T-cell (primary cell): ENCODE measurements at regions of chr15 and their contacts with region 1.

Region 1: GRCh38 chr15:92881802-92882696 is 18.1 kb upstream of the CHD2 start:
- DNase-seq: peak in 33 of 35 experiments; percentile 95 to 100 (median 98)
- ATAC-seq: peak; percentile 89 to 91 (median 90)
- H3K4me3 ChIP-seq: peak overlapping the region; percentile 20 to 42
- H3K4me3 Mint-ChIP-seq: peak overlapping the region; percentile 85 to 93 (median 86)
- H3K27ac ChIP-seq: peak overlapping the region; percentile 85
- H3K27ac Mint-ChIP-seq: peak overlapping the region; percentile 99
- H3K4me1 ChIP-seq: peaks cover 36 to 52% of the 10 kb centered on the region in 2 experiments
- H3K4me1 Mint-ChIP-seq: peaks cover 62 to 76% (median 63%) of the 10 kb centered on the region in 3 donors
- H3K27me3 ChIP-seq: no peaks in the 10 kb centered on the region
- H3K27me3 Mint-ChIP-seq: no peaks in the 10 kb centered on the region

Region 2: GRCh38 chr15:92751524-92751923 is 130.5 kb before region 1 on chr15:
- CTCF ChIA-PET with region 1: no interaction called
- POLR2A ChIA-PET with region 1: no interaction called
- DNase-seq: no peak
- ATAC-seq: no peak
- H3K4me3 ChIP-seq: no peak overlapping the region
- H3K4me3 Mint-ChIP-seq: no peak overlapping the region
- H3K27ac ChIP-seq: no peak overlapping the region
- H3K27ac Mint-ChIP-seq: no peak overlapping the region
- H3K4me1 ChIP-seq: no peaks in the 10 kb centered on the region
- H3K4me1 Mint-ChIP-seq: no peaks in the 10 kb centered on the region
- H3K27me3 ChIP-seq: peaks cover 0 to 6% of the 10 kb centered on the region in 2 experiments
- H3K27me3 Mint-ChIP-seq: peaks cover 0 to 5% of the 10 kb centered on the region in 2 donors

Region 3: GRCh38 chr15:92808978-92809879 is 72.8 kb before region 1 on chr15:
- CTCF ChIA-PET with region 1: interaction called, 7 to 43 read pairs
- POLR2A ChIA-PET with region 1: interaction called, 18 to 132 read pairs
- DNase-seq: peak; percentile 96 to 99 (median 98)
- ATAC-seq: peak; percentile 83 to 91 (median 84)
- H3K4me3 ChIP-seq: peak overlapping the region; percentile 62 to 94
- H3K4me3 Mint-ChIP-seq: peak overlapping the region; percentile 85 to 91 (median 91)
- H3K27ac ChIP-seq: peak overlapping the region; percentile 100
- H3K27ac Mint-ChIP-seq: peak overlapping the region; percentile 98 to 99
- H3K4me1 ChIP-seq: peaks cover 32 to 56% of the 10 kb centered on the region in 2 experiments
- H3K4me1 Mint-ChIP-seq: peaks cover 44 to 53% (median 51%) of the 10 kb centered on the region in 3 donors
- H3K27me3 ChIP-seq: no peaks in the 10 kb centered on the region
- H3K27me3 Mint-ChIP-seq: no peaks in the 10 kb centered on the region

Region 4: GRCh38 chr15:92831655-92832328 is 50.3 kb before region 1 on chr15:
- CTCF ChIA-PET with region 1: interaction called in 1 of 2 experiments, 22 read pairs
- POLR2A ChIA-PET with region 1: interaction called, 27 to 35 read pairs
- DNase-seq: peak; percentile 67 to 90 (median 78)
- ATAC-seq: peak; percentile 92 to 95 (median 94)
- H3K4me3 ChIP-seq: peak overlapping the region; percentile 29 to 47
- H3K4me3 Mint-ChIP-seq: peak overlapping the region; percentile 57 to 77 (median 71)
- H3K27ac ChIP-seq: peak overlapping the region; percentile 92
- H3K27ac Mint-ChIP-seq: peak overlapping the region; percentile 97 to 99
- H3K4me1 ChIP-seq: peaks cover 33 to 35% of the 10 kb centered on the region in 2 experiments
- H3K4me1 Mint-ChIP-seq: peaks cover 44 to 51% (median 48%) of the 10 kb centered on the region in 3 donors
- H3K27me3 ChIP-seq: no peaks in the 10 kb centered on the region
- H3K27me3 Mint-ChIP-seq: no peaks in the 10 kb centered on the region

Region 5: GRCh38 chr15:92896561-92896960 is 14.5 kb after region 1 on chr15:
- CTCF ChIA-PET with region 1: interaction called, 3 to 38 read pairs
- POLR2A ChIA-PET with region 1: interaction called, 15 to 372 read pairs
- DNase-seq: no peak
- ATAC-seq: no peak
- H3K4me3 ChIP-seq: no peak overlapping the region
- H3K4me3 Mint-ChIP-seq: peak overlapping the region; percentile 24 to 59 (median 42)
- H3K27ac ChIP-seq: peak overlapping the region; percentile 52
- H3K27ac Mint-ChIP-seq: peak overlapping the region; percentile 76 to 78
- H3K4me1 ChIP-seq: peaks cover 19 to 60% of the 10 kb centered on the region in 2 experiments
- H3K4me1 Mint-ChIP-seq: peaks cover 73 to 81% (median 73%) of the 10 kb centered on the region in 3 donors
- H3K27me3 ChIP-seq: no peaks in the 10 kb centered on the region
- H3K27me3 Mint-ChIP-seq: no peaks in the 10 kb centered on the region

Region 6: DNA sequence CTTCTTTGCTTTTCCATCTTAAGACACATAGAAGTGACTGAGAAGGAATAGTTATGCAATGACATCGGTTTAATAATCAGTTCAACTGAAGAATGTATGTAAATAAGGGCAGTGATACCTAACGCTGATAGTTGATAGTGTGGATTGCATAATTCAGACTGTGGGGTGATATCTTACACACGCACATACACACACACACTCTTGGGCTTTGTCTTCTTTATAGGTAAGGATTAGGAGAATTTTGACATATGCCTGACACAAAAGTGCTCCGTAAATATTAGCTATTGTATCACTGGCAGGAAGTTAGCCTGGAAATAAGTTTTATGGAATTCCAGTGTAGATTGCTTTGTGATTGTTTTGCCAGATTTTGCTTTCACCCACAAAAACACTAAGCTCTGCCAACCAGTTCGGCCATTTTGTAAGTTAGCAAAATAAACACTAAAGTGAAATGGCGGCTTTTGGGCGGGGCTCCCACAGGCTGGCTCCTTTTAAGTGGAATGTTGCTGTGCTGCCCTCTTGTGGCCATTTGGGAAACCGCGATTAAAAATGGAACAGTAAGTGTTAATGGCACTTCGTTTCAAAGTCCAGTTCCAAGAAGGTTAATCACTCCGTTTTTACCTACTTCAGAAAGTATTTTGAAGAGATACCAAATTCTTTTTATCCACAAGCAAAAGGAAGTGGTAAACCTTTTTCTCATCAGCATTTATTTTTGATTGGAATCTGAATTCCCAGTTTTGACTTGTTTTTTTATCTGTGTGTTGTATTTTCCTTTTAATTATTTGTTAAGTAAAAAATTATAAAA is 35.8 kb after region 1 on chr15:
- CTCF ChIA-PET with region 1: interaction called in 1 of 2 experiments, 59 read pairs
- POLR2A ChIA-PET with region 1: interaction called, 7 to 100 read pairs
- DNase-seq: peak; percentile 77 to 97 (median 89)
- ATAC-seq: peak; percentile 32 to 41 (median 36)
- H3K4me3 ChIP-seq: no peak overlapping the region
- H3K4me3 Mint-ChIP-seq: peak overlapping the region; percentile 7 to 74 (median 29)
- H3K27ac ChIP-seq: peak overlapping the region; percentile 93
- H3K27ac Mint-ChIP-seq: peak overlapping the region; percentile 95 to 96
- H3K4me1 ChIP-seq: peaks cover 69 to 75% of the 10 kb centered on the region in 2 experiments
- H3K4me1 Mint-ChIP-seq: peaks cover 86 to 89% (median 89%) of the 10 kb centered on the region in 3 donors
- H3K27me3 ChIP-seq: no peaks in the 10 kb centered on the region
- H3K27me3 Mint-ChIP-seq: no peaks in the 10 kb centered on the region

Region 7: GRCh38 chr15:93109336-93110102 is 227.5 kb after region 1 on chr15:
- CTCF ChIA-PET with region 1: no interaction called
- POLR2A ChIA-PET with region 1: no interaction called
- DNase-seq: no peak
- ATAC-seq: no peak
- H3K4me3 ChIP-seq: peak overlapping the region in 1 of 2 donors; percentile 12
- H3K4me3 Mint-ChIP-seq: no peak overlapping the region
- H3K27ac ChIP-seq: no peak overlapping the region
- H3K27ac Mint-ChIP-seq: no peak overlapping the region
- H3K4me1 ChIP-seq: peaks cover 0 to 8% of the 10 kb centered on the region in 2 experiments
- H3K4me1 Mint-ChIP-seq: peaks cover 0 to 3% (median 0%) of the 10 kb centered on the region in 3 donors
- H3K27me3 ChIP-seq: peaks cover 7 to 22% of the 10 kb centered on the region in 2 experiments
- H3K27me3 Mint-ChIP-seq: peaks cover 62% of the 10 kb centered on the region in 2 donors